ENCODE measurements at regions of chr12 and their contacts with region 1.

Region 1: GRCh38 chr12:49750027-49750995 is 9.0 kb downstream of the TMBIM6 start:
- DNase-seq: peak in 1 of 4 experiments; percentile 63
- ATAC-seq: peak; percentile 93
- H3K4me3 ChIP-seq: no peak overlapping the region
- H3K27ac ChIP-seq: peak overlapping the region; percentile 56
- H3K4me1 ChIP-seq: peaks cover 3 to 27% of the 10 kb centered on the region in 2 experiments; a peak in 4 of 5 replicates
- H3K27me3 ChIP-seq: no peaks in the 10 kb centered on the region
- CTCF ChIP-seq: peak in 2 of 3 experiments; percentile 32 to 39; a peak in 2 of 6 replicates
- EP300 ChIP-seq: peak; percentile 84
- POLR2A ChIP-seq: no peak
- RAD21 ChIP-seq: peak; percentile 55 to 70

Region 2: GRCh38 chr12:49440035-49440434 is 310.3 kb before region 1 on chr12:
- CTCF ChIA-PET with region 1: no interaction called
- POLR2A ChIA-PET with region 1: no interaction called
- in situ Hi-C with region 1: no loop called
- intact Hi-C with region 1: no loop called
- DNase-seq: no peak
- ATAC-seq: no peak
- H3K4me3 ChIP-seq: no peak overlapping the region
- H3K27ac ChIP-seq: no peak overlapping the region
- H3K4me1 ChIP-seq: no peaks in the 10 kb centered on the region; a peak in 1 of 5 replicates
- H3K27me3 ChIP-seq: no peaks in the 10 kb centered on the region
- CTCF ChIP-seq: no peak
- EP300 ChIP-seq: no peak
- POLR2A ChIP-seq: no peak
- RAD21 ChIP-seq: no peak

Region 3: GRCh38 chr12:49644620-49644994 is 105.7 kb before region 1 on chr12:
- CTCF ChIA-PET with region 1: no interaction called
- POLR2A ChIA-PET with region 1: interaction called, 3 read pairs
- in situ Hi-C with region 1: no loop called
- intact Hi-C with region 1: loop called (anchors 1 kb)
- DNase-seq: peak; percentile 83 to 91 (median 87)
- ATAC-seq: peak; percentile 95
- H3K4me3 ChIP-seq: no peak overlapping the region
- H3K27ac ChIP-seq: 0 out of 3 replicates have a peak overlapping the region, but pooled peaks have one; percentile 25
- H3K4me1 ChIP-seq: peaks cover 0 to 16% of the 10 kb centered on the region in 2 experiments; a peak in 3 of 5 replicates
- H3K27me3 ChIP-seq: no peaks in the 10 kb centered on the region
- CTCF ChIP-seq: peak; percentile 95 to 96 (median 96)
- EP300 ChIP-seq: no peak
- POLR2A ChIP-seq: no peak
- RAD21 ChIP-seq: peak; percentile 99

Region 4: GRCh38 chr12:49730568-49731101 is 19.7 kb before region 1 on chr12:
- CTCF ChIA-PET with region 1: no interaction called
- POLR2A ChIA-PET with region 1: no interaction called
- in situ Hi-C with region 1: no loop called
- intact Hi-C with region 1: no loop called
- DNase-seq: peak; percentile 22 to 40 (median 36)
- ATAC-seq: peak; percentile 88
- H3K4me3 ChIP-seq: no peak overlapping the region
- H3K27ac ChIP-seq: no peak overlapping the region; the same call in 2 of the 3 replicates
- H3K4me1 ChIP-seq: peaks cover 0 to 20% of the 10 kb centered on the region in 2 experiments; a peak in 3 of 5 replicates
- H3K27me3 ChIP-seq: no peaks in the 10 kb centered on the region
- CTCF ChIP-seq: no peak
- EP300 ChIP-seq: peak; percentile 53; the same call in 1 of the 2 replicates
- POLR2A ChIP-seq: no peak
- RAD21 ChIP-seq: no peak

Region 5: GRCh38 chr12:49763006-49763591 is 12.8 kb after region 1 on chr12:
- CTCF ChIA-PET with region 1: no interaction called
- POLR2A ChIA-PET with region 1: interaction called, 22 read pairs
- in situ Hi-C with region 1: no loop called
- intact Hi-C with region 1: no loop called
- DNase-seq: peak; percentile 68 to 76 (median 71)
- ATAC-seq: peak; percentile 77
- H3K4me3 ChIP-seq: no peak overlapping the region
- H3K27ac ChIP-seq: no peak overlapping the region
- H3K4me1 ChIP-seq: no peaks in the 10 kb centered on the region
- H3K27me3 ChIP-seq: no peaks in the 10 kb centered on the region
- CTCF ChIP-seq: peak; percentile 65 to 82 (median 74)
- EP300 ChIP-seq: no peak
- POLR2A ChIP-seq: no peak
- RAD21 ChIP-seq: 0 out of 4 replicates have a peak, but pooled peaks of 1 of the 2 experiments have one; percentile 7

Measured in K562 (cell line).